CD8-positive, alpha-beta T cell (primary cell): ENCODE measurements at regions of chr6 and their contacts with region 1.

Region 1: GRCh38 chr6:87692086-87692485 is 9.9 kb downstream of the AKIRIN2 start:
- DNase-seq: no peak
- ATAC-seq: no peak
- H3K4me3 ChIP-seq: no peak overlapping the region
- H3K4me3 Mint-ChIP-seq: no peak overlapping the region
- H3K27ac ChIP-seq: no peak overlapping the region
- H3K27ac Mint-ChIP-seq: peak overlapping the region; percentile 18
- H3K4me1 ChIP-seq: peaks cover 39% of the 10 kb centered on the region
- H3K4me1 Mint-ChIP-seq: peaks cover 78% of the 10 kb centered on the region
- H3K27me3 ChIP-seq: no peaks in the 10 kb centered on the region
- H3K27me3 Mint-ChIP-seq: no peaks in the 10 kb centered on the region
- CTCF ChIP-seq: no peak

Region 2: GRCh38 chr6:87645080-87645479 is 47.0 kb before region 1 on chr6:
- CTCF ChIA-PET with region 1: no interaction called
- POLR2A ChIA-PET with region 1: no interaction called
- intact Hi-C with region 1: loop called in 1 of 2 experiments (anchors 5 kb)
- DNase-seq: peak in 2 of 9 experiments; percentile 17 to 40
- ATAC-seq: peak; percentile 44
- H3K4me3 ChIP-seq: peak overlapping the region; percentile 21
- H3K4me3 Mint-ChIP-seq: peak overlapping the region; percentile 79
- H3K27ac ChIP-seq: peak overlapping the region in 1 of 2 experiments; percentile 37
- H3K27ac Mint-ChIP-seq: peak overlapping the region; percentile 84
- H3K4me1 ChIP-seq: no peaks in the 10 kb centered on the region
- H3K4me1 Mint-ChIP-seq: peaks cover 11% of the 10 kb centered on the region
- H3K27me3 ChIP-seq: no peaks in the 10 kb centered on the region
- H3K27me3 Mint-ChIP-seq: no peaks in the 10 kb centered on the region
- CTCF ChIP-seq: no peak

Region 3: GRCh38 chr6:87747646-87748045 is 55.6 kb after region 1 on chr6:
- CTCF ChIA-PET with region 1: no interaction called
- POLR2A ChIA-PET with region 1: no interaction called
- intact Hi-C with region 1: no loop called
- DNase-seq: no peak
- ATAC-seq: no peak
- H3K4me3 ChIP-seq: no peak overlapping the region
- H3K4me3 Mint-ChIP-seq: no peak overlapping the region
- H3K27ac ChIP-seq: no peak overlapping the region
- H3K27ac Mint-ChIP-seq: no peak overlapping the region
- H3K4me1 ChIP-seq: peaks cover under 1% of the 10 kb centered on the region
- H3K4me1 Mint-ChIP-seq: peaks cover 6% of the 10 kb centered on the region
- H3K27me3 ChIP-seq: no peaks in the 10 kb centered on the region
- H3K27me3 Mint-ChIP-seq: no peaks in the 10 kb centered on the region
- CTCF ChIP-seq: no peak

Region 4: DNA sequence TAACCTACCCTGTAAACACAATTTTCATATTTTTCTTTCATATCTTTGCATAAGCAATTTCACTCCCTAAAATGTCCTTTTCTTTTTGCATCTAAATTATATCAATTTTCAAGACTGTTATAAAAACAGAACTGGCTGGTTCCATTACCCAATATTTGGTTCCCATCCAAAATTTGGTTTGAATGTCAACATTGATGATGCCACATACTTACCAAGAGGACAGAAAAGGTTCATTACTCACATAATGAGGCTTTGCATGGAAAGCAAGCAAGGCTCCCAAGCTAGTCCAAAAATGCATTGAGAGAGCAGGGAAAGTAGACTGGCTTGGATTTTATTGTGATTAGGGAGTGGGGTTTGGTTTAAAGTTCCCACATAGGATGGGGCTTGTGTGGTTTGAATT is 154.3 kb after region 1 on chr6:
- CTCF ChIA-PET with region 1: no interaction called
- POLR2A ChIA-PET with region 1: no interaction called
- intact Hi-C with region 1: no loop called
- DNase-seq: no peak
- ATAC-seq: no peak
- H3K4me3 ChIP-seq: no peak overlapping the region
- H3K4me3 Mint-ChIP-seq: no peak overlapping the region
- H3K27ac ChIP-seq: no peak overlapping the region
- H3K27ac Mint-ChIP-seq: no peak overlapping the region
- H3K4me1 ChIP-seq: no peaks in the 10 kb centered on the region
- H3K4me1 Mint-ChIP-seq: no peaks in the 10 kb centered on the region
- H3K27me3 ChIP-seq: no peaks in the 10 kb centered on the region
- H3K27me3 Mint-ChIP-seq: peaks cover 10% of the 10 kb centered on the region
- CTCF ChIP-seq: no peak